Adrenal gland (tissue), 19 donors: ENCODE measurements at regions of chr5 and their contacts with region 1.

Region 1: GRCh38 chr5:112419986-112420864 is 1.1 kb upstream of the EPB41L4A start:
- DNase-seq: peak; percentile 82 to 91 (median 88)
- H3K4me3 ChIP-seq: peak overlapping the region; percentile 46 to 80 (median 75)
- H3K27ac ChIP-seq: peak overlapping the region in 3 of 5 donors; percentile 73 to 85 (median 81)
- H3K4me1 ChIP-seq: peaks cover 0 to 7% of the 10 kb centered on the region in 2 donors
- H3K27me3 ChIP-seq: no peaks in the 10 kb centered on the region
- CTCF ChIP-seq: peak; percentile 77 to 93 (median 88)
- POLR2A ChIP-seq: no peak

Region 2: DNA sequence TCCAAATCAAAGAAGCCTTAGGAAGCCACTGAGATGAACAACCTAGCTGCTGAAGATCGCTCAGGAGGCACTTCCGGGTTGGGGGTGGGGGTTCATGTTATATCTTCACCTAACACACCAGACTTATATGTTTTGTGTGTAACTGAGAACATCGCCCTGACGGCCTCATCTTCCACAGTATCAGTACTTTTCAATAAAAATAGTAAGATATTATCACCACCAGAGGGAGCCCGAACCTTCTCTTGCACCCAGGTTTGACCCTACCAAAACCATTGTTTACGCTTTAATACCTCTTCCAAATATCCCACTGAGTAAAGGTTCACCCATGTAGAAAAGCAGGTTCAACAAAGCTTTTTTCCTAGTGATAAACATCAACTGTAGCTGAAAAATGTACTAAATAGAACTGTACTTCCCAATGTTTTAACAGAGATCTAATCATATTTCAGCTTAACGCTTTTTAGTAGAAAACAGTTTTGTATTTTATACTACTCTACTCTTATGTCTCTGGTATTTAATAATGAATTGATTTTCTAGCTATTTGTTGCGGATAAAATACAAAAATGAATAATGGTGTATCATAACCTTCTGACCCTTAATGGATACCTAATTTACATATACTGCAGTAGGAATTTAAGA is 245.1 kb before region 1 on chr5:
- intact Hi-C with region 1: loop called in 1 of 2 experiments (anchors 5 kb)
- DNase-seq: peak in 5 of 7 donors; percentile 21 to 65 (median 33)
- H3K4me3 ChIP-seq: no peak overlapping the region
- H3K27ac ChIP-seq: no peak overlapping the region
- H3K4me1 ChIP-seq: peaks cover 0 to 6% of the 10 kb centered on the region in 2 donors
- H3K27me3 ChIP-seq: no peaks in the 10 kb centered on the region
- CTCF ChIP-seq: peak; percentile 45 to 73 (median 54)
- POLR2A ChIP-seq: no peak

Region 3: GRCh38 chr5:112210430-112211005 is 209.7 kb before region 1 on chr5:
- intact Hi-C with region 1: loop called (anchors 1 to 10 kb)
- DNase-seq: peak; percentile 24 to 74 (median 49)
- H3K4me3 ChIP-seq: no peak overlapping the region
- H3K27ac ChIP-seq: no peak overlapping the region
- H3K4me1 ChIP-seq: no peaks in the 10 kb centered on the region
- H3K27me3 ChIP-seq: no peaks in the 10 kb centered on the region
- CTCF ChIP-seq: peak; percentile 58 to 70 (median 64)
- POLR2A ChIP-seq: no peak

Region 4: GRCh38 chr5:112720576-112720975 is 300.4 kb after region 1 on chr5:
- intact Hi-C with region 1: no loop called
- DNase-seq: no peak
- H3K4me3 ChIP-seq: no peak overlapping the region
- H3K27ac ChIP-seq: no peak overlapping the region
- H3K4me1 ChIP-seq: no peaks in the 10 kb centered on the region
- H3K27me3 ChIP-seq: no peaks in the 10 kb centered on the region
- CTCF ChIP-seq: no peak
- POLR2A ChIP-seq: no peak